ENCODE measurements at regions of chr14 and their contacts with region 1.

Region 1: GRCh38 chr14:105034314-105035039 is 13.6 kb upstream of the CDCA4 start:
- DNase-seq: no peak
- H3K4me3 ChIP-seq: no peak overlapping the region
- H3K27ac ChIP-seq: no peak overlapping the region
- H3K4me1 ChIP-seq: no peaks in the 10 kb centered on the region
- H3K27me3 ChIP-seq: peaks cover 58% of the 10 kb centered on the region
- CTCF ChIP-seq: no peak

Region 2: DNA sequence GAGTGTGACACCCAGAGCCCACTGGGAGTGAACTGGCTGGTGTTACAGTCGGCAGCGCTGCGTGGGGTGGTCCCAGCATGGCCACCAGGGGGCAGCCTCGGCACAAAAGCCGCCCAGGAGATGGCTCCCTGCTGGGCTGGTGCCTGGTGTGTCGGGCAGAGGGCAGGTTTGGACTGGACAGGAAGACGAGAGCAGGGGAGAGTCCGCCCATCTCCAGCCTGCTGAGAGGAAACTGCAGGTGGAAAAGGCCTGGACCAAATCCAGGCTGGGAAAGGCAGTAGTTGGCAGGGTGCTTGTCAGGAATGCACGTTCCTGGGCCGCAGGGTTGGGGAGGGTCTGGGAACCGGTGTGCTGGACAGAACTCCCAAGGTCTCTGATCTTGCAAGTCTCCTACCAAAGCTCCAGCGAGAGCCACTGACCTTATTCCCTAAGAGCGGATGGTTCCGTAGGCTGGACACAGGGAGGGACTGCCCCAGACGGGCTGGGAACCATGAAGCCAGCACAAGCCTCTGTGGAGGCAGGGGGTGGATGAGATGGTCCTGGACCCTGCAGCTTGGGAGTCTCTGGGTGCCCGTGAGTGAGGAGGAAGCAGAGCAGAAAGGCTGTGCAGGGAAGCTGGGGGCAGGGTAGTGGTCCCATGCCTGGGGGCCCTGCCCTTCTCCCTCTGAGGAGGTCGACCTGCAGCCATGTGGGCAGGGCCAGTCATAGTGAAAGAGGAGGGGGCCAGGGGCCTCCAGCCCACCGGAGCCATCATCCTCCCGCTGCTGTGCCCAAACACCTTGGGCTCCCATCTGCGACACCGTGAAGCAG is 58.1 kb before region 1 on chr14:
- intact Hi-C with region 1: loop called (anchors 10 kb)
- DNase-seq: peak; percentile 83
- H3K4me3 ChIP-seq: no peak overlapping the region
- H3K27ac ChIP-seq: no peak overlapping the region
- H3K4me1 ChIP-seq: peaks cover 76% of the 10 kb centered on the region
- H3K27me3 ChIP-seq: peaks cover 33% of the 10 kb centered on the region
- CTCF ChIP-seq: peak; percentile 95